ENCODE measurements at regions of chr4 and their contacts with region 1.

Region 1: GRCh38 chr4:140816806-140817510 is 60.8 kb upstream of the TBC1D9 start:
- DNase-seq: no peak
- H3K4me3 ChIP-seq: no peak overlapping the region
- H3K27ac ChIP-seq: no peak overlapping the region
- H3K4me1 ChIP-seq: peaks cover 40% of the 10 kb centered on the region
- CTCF ChIP-seq: no peak

Region 2: GRCh38 chr4:140800666-140801065 is 16.3 kb before region 1 on chr4:
- CTCF ChIA-PET with region 1: interaction called, 3 read pairs
- POLR2A ChIA-PET with region 1: interaction called, 11 read pairs
- intact Hi-C with region 1: no loop called
- DNase-seq: peak; percentile 62
- H3K4me3 ChIP-seq: no peak overlapping the region
- H3K27ac ChIP-seq: no peak overlapping the region
- H3K4me1 ChIP-seq: peaks cover 64% of the 10 kb centered on the region
- CTCF ChIP-seq: no peak

Measured in OCI-LY7 (cell line).